Activated CD4-positive, alpha-beta memory T cell treated with anti-CD3 and anti-CD28 coated beads for 36 hours (primary cell): ENCODE measurements at regions of chr1 and their contacts with region 1.

Region 1: DNA sequence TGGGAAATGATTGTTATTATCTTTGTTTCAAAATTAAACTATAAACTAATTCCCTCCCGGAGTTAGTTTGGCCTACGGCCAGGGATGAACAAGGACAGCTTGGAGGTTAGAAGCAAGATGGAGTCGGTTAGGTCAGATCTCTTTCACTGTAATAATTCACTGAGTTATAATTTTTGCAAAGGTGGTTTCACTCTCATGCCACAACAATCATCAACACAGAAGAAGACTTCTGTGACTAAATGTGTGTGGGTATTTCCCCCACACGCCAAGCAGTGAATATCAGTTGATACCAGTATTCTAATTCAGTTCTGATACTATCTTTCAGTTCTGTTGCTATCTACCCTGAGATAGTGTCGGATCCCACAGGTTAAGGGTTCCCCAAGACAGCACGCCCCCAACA is 215.1 kb downstream of the S1PR1 start:
- DNase-seq: peak; percentile 44
- H3K4me3 Mint-ChIP-seq: no peak overlapping the region
- H3K27ac Mint-ChIP-seq: peak overlapping the region; percentile 31
- H3K4me1 Mint-ChIP-seq: peaks cover 34% of the 10 kb centered on the region
- H3K27me3 Mint-ChIP-seq: peaks cover 10% of the 10 kb centered on the region

Region 2: GRCh38 chr1:101325144-101325543 is 126.7 kb before region 1 on chr1:
- CTCF ChIA-PET with region 1: no interaction called
- POLR2A ChIA-PET with region 1: no interaction called
- intact Hi-C with region 1: no loop called
- DNase-seq: no peak
- H3K4me3 Mint-ChIP-seq: no peak overlapping the region
- H3K27ac Mint-ChIP-seq: no peak overlapping the region
- H3K4me1 Mint-ChIP-seq: no peaks in the 10 kb centered on the region
- H3K27me3 Mint-ChIP-seq: no peaks in the 10 kb centered on the region

Region 3: GRCh38 chr1:101388904-101389546 is 62.9 kb before region 1 on chr1:
- CTCF ChIA-PET with region 1: no interaction called
- POLR2A ChIA-PET with region 1: no interaction called
- intact Hi-C with region 1: loop called (anchors 5 kb)
- DNase-seq: peak; percentile 56
- H3K4me3 Mint-ChIP-seq: no peak overlapping the region
- H3K27ac Mint-ChIP-seq: peak overlapping the region; percentile 46
- H3K4me1 Mint-ChIP-seq: peaks cover 7% of the 10 kb centered on the region
- H3K27me3 Mint-ChIP-seq: no peaks in the 10 kb centered on the region

Region 4: GRCh38 chr1:101410048-101410878 is 41.6 kb before region 1 on chr1:
- CTCF ChIA-PET with region 1: no interaction called
- POLR2A ChIA-PET with region 1: no interaction called
- intact Hi-C with region 1: loop called (anchors 5 kb)
- DNase-seq: peak; percentile 26
- H3K4me3 Mint-ChIP-seq: no peak overlapping the region
- H3K27ac Mint-ChIP-seq: no peak overlapping the region
- H3K4me1 Mint-ChIP-seq: peaks cover 4% of the 10 kb centered on the region
- H3K27me3 Mint-ChIP-seq: peaks cover 9% of the 10 kb centered on the region